Stomach (tissue), 19 donors: ENCODE measurements at regions of chr1 and their contacts with region 1.

Region 1: GRCh38 chr1:111747282-111747734 is 8.1 kb upstream of the INKA2 start:
- DNase-seq: peak; percentile 70 to 74
- H3K4me3 ChIP-seq: no peak overlapping the region
- H3K27ac ChIP-seq: peak overlapping the region in 1 of 5 donors; percentile 43
- H3K4me1 ChIP-seq: peaks cover 0 to 17% (median 0%) of the 10 kb centered on the region in 4 donors
- H3K27me3 ChIP-seq: peaks cover 0 to 2% (median 0%) of the 10 kb centered on the region in 3 donors
- CTCF ChIP-seq: peak in 5 of 7 experiments; percentile 47 to 74 (median 64)
- EP300 ChIP-seq: no peak
- POLR2A ChIP-seq: no peak

Region 2: DNA sequence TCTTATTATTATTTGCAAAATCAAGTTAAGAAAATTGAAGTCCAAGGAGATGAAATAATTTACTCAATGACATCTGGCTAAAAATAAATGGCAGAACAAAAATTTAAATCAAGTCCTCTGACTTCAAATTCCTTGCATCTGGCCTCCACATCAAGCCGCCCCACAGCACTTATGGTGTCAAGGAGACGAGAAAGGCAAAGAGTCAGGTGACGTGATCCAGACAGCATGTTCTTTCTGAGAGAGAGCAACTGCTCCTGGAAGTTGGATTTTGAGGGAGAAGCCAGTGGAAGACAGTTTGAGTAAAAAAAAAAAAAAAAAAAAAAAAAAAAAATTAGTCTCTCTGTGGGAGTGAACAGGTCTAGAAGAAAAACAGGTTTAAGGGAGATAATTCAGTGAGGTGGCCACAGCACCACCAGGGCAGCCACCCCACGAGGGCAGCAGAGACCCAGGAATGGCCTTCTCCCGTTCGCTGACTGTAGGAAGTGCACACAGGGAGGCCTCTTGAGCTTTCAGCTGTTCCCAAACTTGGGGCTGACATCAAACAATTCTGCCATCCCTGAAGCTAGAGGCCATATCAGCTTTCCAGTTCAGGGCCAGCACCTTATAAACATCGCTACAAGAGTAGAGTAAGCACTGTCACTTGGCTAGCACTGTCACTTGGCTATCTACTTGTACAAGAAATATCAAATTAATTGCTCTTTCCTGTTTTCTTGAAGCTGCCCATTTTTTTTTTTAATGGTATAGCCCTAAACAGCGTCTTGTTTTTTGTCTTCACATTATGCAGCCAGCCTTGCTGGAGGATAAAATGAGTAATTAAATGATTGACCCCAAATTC is 265.7 kb before region 1 on chr1:
- intact Hi-C with region 1: loop called (anchors 10 kb)
- DNase-seq: peak; percentile 77 to 94
- H3K4me3 ChIP-seq: no peak overlapping the region
- H3K27ac ChIP-seq: no peak overlapping the region
- H3K4me1 ChIP-seq: peaks cover 0 to 39% (median 8%) of the 10 kb centered on the region in 4 donors
- H3K27me3 ChIP-seq: no peaks in the 10 kb centered on the region
- CTCF ChIP-seq: peak in 5 of 7 experiments; percentile 51 to 74 (median 64)
- EP300 ChIP-seq: no peak
- POLR2A ChIP-seq: no peak

Region 3: DNA sequence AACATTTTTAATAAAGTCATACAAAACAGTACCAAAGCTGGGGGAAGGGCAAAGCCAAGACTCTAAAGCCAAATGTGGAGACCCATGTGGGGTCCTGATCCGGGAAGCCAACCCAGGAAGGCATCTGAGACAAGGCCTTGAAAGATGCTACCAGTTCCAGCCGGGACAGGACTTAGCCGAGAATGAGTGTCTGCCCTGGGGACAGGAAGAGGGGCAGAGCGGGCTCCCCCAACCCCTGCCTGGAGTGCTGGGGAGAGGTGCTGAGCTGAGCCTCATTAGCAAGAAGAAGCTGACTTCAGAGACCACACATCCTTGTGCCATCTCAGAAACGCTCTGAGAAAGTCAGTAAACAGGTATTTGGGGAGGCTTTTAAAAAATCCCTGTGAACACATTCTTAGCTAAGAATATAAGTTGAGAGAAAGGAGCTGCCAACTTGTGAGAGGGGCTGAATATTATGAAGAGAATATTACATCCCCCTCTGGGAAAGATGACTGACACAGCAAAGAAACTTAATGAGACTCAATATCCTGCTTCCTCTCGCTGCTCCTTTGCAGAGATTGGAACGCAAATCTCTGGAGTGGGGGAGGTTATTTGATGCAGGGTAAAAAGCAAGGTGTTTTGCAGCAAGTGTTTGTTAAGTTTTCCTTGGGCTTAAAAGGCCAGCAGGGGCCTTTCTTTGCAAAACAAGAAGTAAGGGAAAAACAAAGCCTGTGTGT is 345.5 kb after region 1 on chr1:
- intact Hi-C with region 1: no loop called
- DNase-seq: no peak
- H3K4me3 ChIP-seq: no peak overlapping the region
- H3K27ac ChIP-seq: no peak overlapping the region
- H3K4me1 ChIP-seq: no peaks in the 10 kb centered on the region
- H3K27me3 ChIP-seq: peaks cover 0 to 23% (median 0%) of the 10 kb centered on the region in 3 donors
- CTCF ChIP-seq: no peak
- EP300 ChIP-seq: no peak
- POLR2A ChIP-seq: no peak